Activated naive CD4-positive, alpha-beta T cell treated with anti-CD3 and anti-CD28 coated beads for 36 hours (primary cell): ENCODE measurements at regions of chr2 and their contacts with region 1.

Region 1: GRCh38 chr2:71545572-71546274 is 92.4 kb downstream of the DYSF start:
- DNase-seq: peak; percentile 64
- H3K4me3 Mint-ChIP-seq: peak overlapping the region; percentile 48
- H3K27ac Mint-ChIP-seq: no peak overlapping the region
- H3K4me1 Mint-ChIP-seq: peaks cover 11% of the 10 kb centered on the region
- H3K27me3 Mint-ChIP-seq: peaks cover 13% of the 10 kb centered on the region

Region 2: GRCh38 chr2:71873594-71873993 is 327.9 kb after region 1 on chr2:
- CTCF ChIA-PET with region 1: interaction called, 3 read pairs
- intact Hi-C with region 1: loop called (anchors 5 kb)
- DNase-seq: no peak
- H3K4me3 Mint-ChIP-seq: no peak overlapping the region
- H3K27ac Mint-ChIP-seq: no peak overlapping the region
- H3K4me1 Mint-ChIP-seq: no peaks in the 10 kb centered on the region
- H3K27me3 Mint-ChIP-seq: peaks cover 28% of the 10 kb centered on the region

Region 3: GRCh38 chr2:72137498-72138010 is 591.8 kb after region 1 on chr2:
- CTCF ChIA-PET with region 1: no interaction called
- intact Hi-C with region 1: loop called (anchors 1 kb)
- DNase-seq: peak; percentile 76
- H3K4me3 Mint-ChIP-seq: no peak overlapping the region
- H3K27ac Mint-ChIP-seq: no peak overlapping the region
- H3K4me1 Mint-ChIP-seq: no peaks in the 10 kb centered on the region
- H3K27me3 Mint-ChIP-seq: peaks cover 16% of the 10 kb centered on the region

Region 4: GRCh38 chr2:72579591-72580180 is 1034.0 kb after region 1 on chr2:
- CTCF ChIA-PET with region 1: interaction called, 3 read pairs
- intact Hi-C with region 1: loop called (anchors 2 kb)
- DNase-seq: no peak
- H3K4me3 Mint-ChIP-seq: no peak overlapping the region
- H3K27ac Mint-ChIP-seq: no peak overlapping the region
- H3K4me1 Mint-ChIP-seq: no peaks in the 10 kb centered on the region
- H3K27me3 Mint-ChIP-seq: no peaks in the 10 kb centered on the region